ENCODE measurements at regions of chr9 and their contacts with region 1.

Region 1: GRCh38 chr9:114805670-114806525 is at the start of gene TNFSF15:
- DNase-seq: peak; percentile 22
- H3K4me3 Mint-ChIP-seq: peak within 1 kb of the TSS; percentile 10
- H3K27ac Mint-ChIP-seq: peak within 1 kb of the TSS; percentile 30
- H3K4me1 Mint-ChIP-seq: peaks cover 28% of the 10 kb centered on the region
- H3K27me3 Mint-ChIP-seq: peaks cover 31% of the 10 kb centered on the region
- total RNA-seq, gene TNFSF15: 0.25 and 0.28 TPM in 2 replicates

Region 2: DNA sequence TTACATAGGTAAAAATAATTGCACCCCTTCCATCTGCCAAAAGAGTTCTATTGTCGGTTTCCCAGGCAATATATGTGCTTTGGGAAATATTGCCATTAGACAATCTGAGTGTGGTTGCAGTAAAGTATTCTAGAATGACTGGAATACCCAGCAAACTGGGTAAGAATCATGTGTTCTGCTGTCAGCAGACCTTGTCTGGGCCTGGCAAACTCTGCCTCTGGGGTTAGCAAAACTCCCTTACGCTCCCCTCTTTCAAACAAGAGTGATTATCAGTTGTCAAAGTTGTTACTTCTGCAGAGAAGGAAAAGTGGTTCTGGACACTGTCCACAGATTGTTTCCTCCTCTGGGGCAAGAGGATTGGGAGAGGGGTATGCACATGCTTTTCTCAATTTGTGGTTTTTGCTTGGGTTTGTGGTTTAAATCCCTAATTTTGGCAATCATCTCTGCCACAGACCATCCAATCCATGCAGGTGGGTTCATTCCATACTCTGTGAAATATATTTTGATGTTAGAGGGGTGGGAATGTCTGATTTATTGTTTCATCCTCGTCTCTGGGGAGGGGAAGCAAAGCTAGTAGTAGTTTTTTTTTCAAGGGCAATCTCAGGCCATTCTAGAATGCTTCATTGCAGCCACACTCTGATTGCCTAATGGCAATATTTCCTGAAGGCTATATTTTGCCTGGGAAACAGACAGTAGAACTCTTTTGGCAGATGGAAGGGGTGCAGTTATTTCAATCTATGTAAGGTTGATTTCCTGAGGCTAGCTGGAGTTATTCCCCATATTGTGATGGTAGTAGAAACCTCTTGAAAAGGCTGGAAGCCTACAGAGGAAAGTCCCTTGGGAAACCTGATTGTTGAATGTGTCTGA is 23.9 kb after region 1 on chr9:
- intact Hi-C with region 1: loop called (anchors 2 kb)
- DNase-seq: no peak
- H3K4me3 Mint-ChIP-seq: no peak overlapping the region
- H3K27ac Mint-ChIP-seq: no peak overlapping the region
- H3K4me1 Mint-ChIP-seq: peaks cover 23% of the 10 kb centered on the region
- H3K27me3 Mint-ChIP-seq: peaks cover 51% of the 10 kb centered on the region

Region 3: DNA sequence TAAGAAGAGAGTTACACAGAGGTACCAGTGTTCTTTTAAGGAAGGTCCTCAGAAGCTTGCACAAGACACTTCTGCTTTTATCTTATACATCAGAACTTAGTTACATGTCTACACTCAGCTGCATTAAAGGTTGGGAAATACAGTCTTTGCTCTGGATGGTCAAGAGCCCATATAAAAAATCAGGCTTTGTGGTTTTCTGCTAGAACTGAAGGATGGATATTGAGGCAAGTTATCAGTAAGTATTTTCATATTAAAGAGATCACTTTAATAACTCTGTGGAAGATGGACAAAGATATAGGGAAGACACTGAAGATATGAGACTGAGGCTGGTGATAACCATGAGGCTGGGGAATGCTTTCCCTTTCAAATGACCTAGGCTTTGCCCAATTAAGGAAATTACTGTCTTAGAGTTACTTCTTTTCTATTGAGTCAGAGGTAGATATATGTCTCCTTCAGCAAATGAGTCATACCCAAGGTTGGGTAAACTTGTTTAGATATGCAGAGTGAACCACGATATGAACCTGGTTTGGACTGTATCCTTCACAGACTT is 399.1 kb after region 1 on chr9:
- intact Hi-C with region 1: loop called (anchors 10 kb)
- DNase-seq: no peak
- H3K4me3 Mint-ChIP-seq: no peak overlapping the region
- H3K27ac Mint-ChIP-seq: no peak overlapping the region
- H3K4me1 Mint-ChIP-seq: peaks cover 40% of the 10 kb centered on the region
- H3K27me3 Mint-ChIP-seq: peaks cover 17% of the 10 kb centered on the region

Measured in activated T-helper 2 cell treated with anti-CD3 and anti-CD28 coated beads, Interferon-gamma antibody, Interleukin-2, Interleukin-4, amounts not matched to agents 10 μg/mL and 5 μg/mL and 100 μg/mL, durations not matched to agents 14 hours and 24 hours and 36 hours (primary cell).